K562 (cell line): ENCODE measurements at regions of chr21 and their contacts with region 1.

Region 1: GRCh38 chr21:44326716-44327602 is 12.2 kb downstream of the CFAP410 start:
- DNase-seq: no peak
- ATAC-seq: no peak
- H3K4me3 ChIP-seq: no peak overlapping the region
- H3K27ac ChIP-seq: no peak overlapping the region
- H3K4me1 ChIP-seq: peaks cover 0 to 48% of the 10 kb centered on the region in 2 experiments; a peak in 2 of 5 replicates
- H3K27me3 ChIP-seq: no peaks in the 10 kb centered on the region
- CTCF ChIP-seq: no peak
- EP300 ChIP-seq: no peak
- POLR2A ChIP-seq: no peak
- RAD21 ChIP-seq: no peak

Region 2: GRCh38 chr21:44039828-44040227 is 287.1 kb before region 1 on chr21:
- CTCF ChIA-PET with region 1: no interaction called
- POLR2A ChIA-PET with region 1: no interaction called
- in situ Hi-C with region 1: no loop called
- intact Hi-C with region 1: no loop called
- DNase-seq: no peak
- ATAC-seq: no peak
- H3K4me3 ChIP-seq: no peak overlapping the region
- H3K27ac ChIP-seq: no peak overlapping the region
- H3K4me1 ChIP-seq: peaks cover 3 to 6% of the 10 kb centered on the region in 2 experiments; a peak in 3 of 5 replicates
- H3K27me3 ChIP-seq: no peaks in the 10 kb centered on the region
- CTCF ChIP-seq: no peak
- EP300 ChIP-seq: no peak
- POLR2A ChIP-seq: no peak
- RAD21 ChIP-seq: no peak

Region 3: GRCh38 chr21:44338971-44339910 is 12.3 kb after region 1 on chr21 and contains the start of gene CFAP410:
- CTCF ChIA-PET with region 1: interaction called, 3 read pairs
- POLR2A ChIA-PET with region 1: interaction called, 11 read pairs
- in situ Hi-C with region 1: no loop called
- intact Hi-C with region 1: no loop called
- DNase-seq: peak; percentile 97 to 99 (median 98)
- ATAC-seq: peak; percentile 98
- H3K4me3 ChIP-seq: peak within 1 kb of the TSS; percentile 74
- H3K27ac ChIP-seq: peak within 1 kb of the TSS; percentile 95
- H3K4me1 ChIP-seq: peaks cover 17 to 28% of the 10 kb centered on the region in 2 experiments; a peak in 4 of 5 replicates
- H3K27me3 ChIP-seq: peaks cover 0 to 4% of the 10 kb centered on the region in 2 experiments; a peak in 1 of 5 replicates
- CTCF ChIP-seq: no peak
- EP300 ChIP-seq: no peak; the same call in 1 of the 2 replicates
- POLR2A ChIP-seq: peak; percentile 96
- RAD21 ChIP-seq: 0 out of 4 replicates have a peak, but pooled peaks of 1 of the 2 experiments have one; percentile 11
- polyA plus RNA-seq, gene CFAP410: 0.07 to 0.18 TPM

Region 4: DNA sequence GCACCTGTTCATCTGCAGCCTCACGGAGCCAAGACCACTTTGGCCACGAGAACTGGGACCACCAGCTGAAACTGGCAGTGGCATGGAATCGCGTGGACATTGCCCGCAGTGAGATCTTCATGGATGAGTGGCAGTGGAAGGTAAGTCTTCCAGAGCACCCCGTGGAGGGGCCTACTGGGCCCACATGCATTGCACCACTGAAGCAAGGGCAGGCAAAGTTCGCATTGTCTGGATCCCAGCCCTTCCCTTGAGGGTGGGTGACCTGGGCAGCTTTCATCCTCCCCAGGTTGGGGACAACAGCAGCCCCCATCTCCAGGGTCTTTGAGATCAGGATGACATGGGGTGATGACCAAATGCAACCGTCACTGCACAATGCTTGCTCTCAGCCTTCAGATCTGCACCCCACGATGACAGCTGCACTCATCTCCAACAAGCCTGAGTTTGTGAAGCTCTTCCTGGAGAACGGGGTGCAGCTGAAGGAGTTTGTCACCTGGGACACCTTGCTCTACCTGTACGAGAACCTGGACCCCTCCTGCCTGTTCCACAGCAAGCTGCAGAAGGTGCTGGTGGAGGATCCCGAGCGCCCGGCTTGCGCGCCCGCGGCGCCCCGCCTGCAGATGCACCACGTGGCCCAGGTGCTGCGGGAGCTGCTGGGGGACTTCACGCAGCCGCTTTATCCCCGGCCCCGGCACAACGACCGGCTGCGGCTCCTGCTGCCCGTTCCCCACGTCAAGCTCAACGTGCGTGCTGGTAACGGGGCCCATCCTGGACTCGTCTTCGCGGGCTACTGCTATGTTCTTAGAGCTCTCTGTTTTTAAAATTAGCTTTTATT is 64.1 kb after region 1 on chr21:
- CTCF ChIA-PET with region 1: no interaction called
- POLR2A ChIA-PET with region 1: no interaction called
- in situ Hi-C with region 1: no loop called
- intact Hi-C with region 1: no loop called
- DNase-seq: no peak
- ATAC-seq: no peak
- H3K4me3 ChIP-seq: no peak overlapping the region
- H3K27ac ChIP-seq: no peak overlapping the region
- H3K4me1 ChIP-seq: peaks cover 0 to 5% of the 10 kb centered on the region in 2 experiments; a peak in 1 of 5 replicates
- H3K27me3 ChIP-seq: peaks cover 0 to 30% of the 10 kb centered on the region in 2 experiments; a peak in 2 of 5 replicates
- CTCF ChIP-seq: no peak
- EP300 ChIP-seq: no peak
- POLR2A ChIP-seq: no peak
- RAD21 ChIP-seq: no peak